Panc1 (cell line): ENCODE measurements at regions of chr11 and their contacts with region 1.

Region 1: GRCh38 chr11:47186937-47187695 is 882 bp upstream of the PACSIN3 start:
- DNase-seq: peak; percentile 64
- ATAC-seq: peak; percentile 79
- H3K4me3 ChIP-seq: peak overlapping the region; percentile 56 to 64
- H3K27ac ChIP-seq: peak overlapping the region; percentile 62
- H3K4me1 ChIP-seq: peaks cover 30% of the 10 kb centered on the region
- H3K27me3 ChIP-seq: no peaks in the 10 kb centered on the region
- CTCF ChIP-seq: no peak; the same call in 1 of the 2 replicates

Region 2: GRCh38 chr11:47225552-47226400 is 38.7 kb after region 1 on chr11:
- CTCF ChIA-PET with region 1: no interaction called
- POLR2A ChIA-PET with region 1: interaction called, 14 read pairs
- in situ Hi-C with region 1: no loop called
- intact Hi-C with region 1: no loop called
- DNase-seq: no peak
- ATAC-seq: no peak
- H3K4me3 ChIP-seq: no peak overlapping the region
- H3K27ac ChIP-seq: no peak overlapping the region
- H3K4me1 ChIP-seq: no peaks in the 10 kb centered on the region
- H3K27me3 ChIP-seq: no peaks in the 10 kb centered on the region
- CTCF ChIP-seq: no peak